GM10248 (cell line): ENCODE measurements at regions of chr5 and their contacts with region 1.

Region 1: DNA sequence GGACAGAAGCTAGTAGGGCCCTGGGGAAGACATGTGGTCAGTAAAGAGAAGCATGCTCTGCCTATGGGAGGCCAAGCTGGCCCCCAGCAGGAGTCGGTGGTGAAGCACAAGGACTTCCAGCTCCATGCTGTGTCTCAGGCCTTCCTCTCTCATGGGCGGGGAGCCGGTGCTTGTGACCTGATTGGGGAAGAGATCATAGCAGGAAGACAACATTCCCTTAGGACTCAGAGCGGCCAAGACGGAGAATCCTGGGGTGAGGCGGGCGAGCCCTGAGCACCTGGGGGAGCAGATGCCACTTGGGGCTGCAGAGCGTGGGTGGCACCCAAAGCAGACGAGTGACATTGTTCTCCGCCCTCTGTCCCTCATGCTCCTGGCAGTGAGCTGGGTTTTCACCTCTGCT is 33.3 kb upstream of the CNOT6 start:
- DNase-seq: no peak
- CTCF ChIP-seq: no peak

Region 2: GRCh38 chr5:180411948-180412347 is 48.9 kb before region 1 on chr5:
- CTCF ChIA-PET with region 1: no interaction called
- POLR2A ChIA-PET with region 1: no interaction called
- DNase-seq: no peak
- CTCF ChIP-seq: no peak

Region 3: GRCh38 chr5:180470966-180471582 is 10.2 kb after region 1 on chr5:
- CTCF ChIA-PET with region 1: interaction called, 31 read pairs
- POLR2A ChIA-PET with region 1: no interaction called
- DNase-seq: peak; percentile 78
- CTCF ChIP-seq: peak; percentile 86